ENCODE measurements at regions of chr12 and their contacts with region 1.

Region 1: DNA sequence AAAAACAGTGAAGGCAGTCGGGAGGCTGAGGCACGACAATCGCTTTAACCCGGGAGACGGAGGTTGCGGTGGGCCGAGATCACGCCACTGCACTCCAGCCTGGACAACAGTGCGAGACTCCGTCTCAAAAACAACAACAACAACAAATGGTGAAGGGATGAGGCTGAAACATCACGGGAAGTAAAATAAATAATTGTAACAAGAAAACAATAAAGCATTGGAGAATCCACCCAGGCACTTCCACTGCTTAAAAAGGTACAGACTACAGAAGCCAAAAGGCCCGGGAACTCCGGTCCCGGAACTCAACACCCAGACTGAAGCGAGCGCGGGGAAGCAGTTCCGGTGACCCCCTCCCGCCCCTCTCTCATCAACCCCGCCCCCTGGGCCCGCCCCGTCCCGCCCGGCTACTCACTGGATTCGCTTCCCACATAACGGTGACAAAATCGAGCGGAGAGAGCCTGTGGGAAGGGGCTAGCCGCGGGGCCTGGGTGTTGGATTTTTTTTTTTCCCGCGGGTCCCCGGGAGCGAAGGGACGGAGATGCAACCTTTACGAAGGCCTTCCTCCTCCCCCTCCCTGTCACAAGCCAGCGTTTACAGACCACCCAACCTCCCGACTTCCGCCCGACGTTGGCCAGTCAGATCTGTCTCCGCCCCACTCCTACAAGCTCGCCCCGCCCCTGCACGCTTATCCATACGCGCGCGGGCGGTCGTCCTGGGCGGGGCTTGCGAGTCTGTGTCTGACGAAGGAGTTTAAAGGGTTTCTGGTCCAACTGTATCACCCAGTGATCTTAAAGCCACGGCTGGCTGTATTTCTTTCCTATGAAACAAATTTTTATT is at the start of gene PARP11:
- DNase-seq: peak; percentile 97
- H3K4me3 ChIP-seq: peak within 1 kb of the TSS; percentile 80
- H3K27ac ChIP-seq: peak within 1 kb of the TSS; percentile 49
- H3K4me1 ChIP-seq: peaks cover 36% of the 10 kb centered on the region
- CTCF ChIP-seq: no peak
- total RNA-seq, gene PARP11: 3.8 and 13.6 TPM in 2 replicates

Region 2: GRCh38 chr12:3542883-3543282 is 330.1 kb before region 1 on chr12:
- CTCF ChIA-PET with region 1: no interaction called
- POLR2A ChIA-PET with region 1: no interaction called
- intact Hi-C with region 1: no loop called
- DNase-seq: no peak
- H3K4me3 ChIP-seq: no peak overlapping the region
- H3K27ac ChIP-seq: no peak overlapping the region
- H3K4me1 ChIP-seq: no peaks in the 10 kb centered on the region
- CTCF ChIP-seq: no peak

Region 3: DNA sequence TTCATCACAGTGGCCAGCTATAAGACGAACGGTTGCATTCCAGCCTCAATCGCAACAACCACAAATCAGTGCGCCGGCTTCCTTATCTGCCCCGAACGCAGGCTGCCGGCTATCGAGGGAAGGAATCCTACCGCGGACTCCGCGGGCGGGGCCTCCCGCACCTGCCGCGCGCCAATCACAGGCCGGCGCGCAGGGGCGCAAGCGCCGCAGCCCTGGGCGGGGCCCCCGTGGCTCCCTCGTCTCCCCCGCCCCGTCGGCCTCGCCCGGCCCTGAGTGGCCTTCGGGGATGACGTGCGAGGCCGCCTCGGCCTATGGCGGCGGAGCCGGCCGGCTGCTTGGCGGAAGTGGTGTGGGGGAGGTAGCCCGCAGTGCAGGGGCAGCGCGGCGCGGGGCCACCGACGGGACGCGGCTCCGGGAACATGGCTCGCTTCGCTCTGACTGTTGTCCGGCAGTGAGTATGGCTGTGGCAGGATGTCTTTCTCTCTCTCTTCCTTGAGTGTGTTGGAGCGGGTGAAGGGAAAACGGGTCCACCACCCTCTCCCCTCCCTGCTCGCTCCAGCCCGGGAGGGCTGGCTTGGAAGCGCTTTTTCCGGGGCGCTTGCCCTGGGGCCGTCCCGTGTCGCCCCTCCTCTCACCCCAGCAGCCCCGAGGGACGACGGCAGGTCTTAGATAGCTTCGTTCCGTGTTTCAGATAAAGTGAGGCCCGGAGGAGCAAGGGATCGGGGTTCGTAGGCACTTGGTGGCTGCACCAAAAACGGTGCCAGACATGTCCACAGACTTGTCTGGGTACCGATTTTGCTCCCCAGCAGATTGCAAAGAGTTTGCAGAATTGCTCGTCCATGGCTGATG is 448.1 kb after region 1 on chr12 and contains the start of gene TIGAR:
- CTCF ChIA-PET with region 1: no interaction called
- POLR2A ChIA-PET with region 1: interaction called, 3 read pairs
- intact Hi-C with region 1: loop called (anchors 5 kb)
- DNase-seq: peak; percentile 96
- H3K4me3 ChIP-seq: peak within 1 kb of the TSS; percentile 85
- H3K27ac ChIP-seq: peak within 1 kb of the TSS; percentile 59
- H3K4me1 ChIP-seq: peaks cover 23% of the 10 kb centered on the region
- CTCF ChIP-seq: no peak
- total RNA-seq, gene TIGAR: 8.0 and 15.4 TPM in 2 replicates

Region 4: DNA sequence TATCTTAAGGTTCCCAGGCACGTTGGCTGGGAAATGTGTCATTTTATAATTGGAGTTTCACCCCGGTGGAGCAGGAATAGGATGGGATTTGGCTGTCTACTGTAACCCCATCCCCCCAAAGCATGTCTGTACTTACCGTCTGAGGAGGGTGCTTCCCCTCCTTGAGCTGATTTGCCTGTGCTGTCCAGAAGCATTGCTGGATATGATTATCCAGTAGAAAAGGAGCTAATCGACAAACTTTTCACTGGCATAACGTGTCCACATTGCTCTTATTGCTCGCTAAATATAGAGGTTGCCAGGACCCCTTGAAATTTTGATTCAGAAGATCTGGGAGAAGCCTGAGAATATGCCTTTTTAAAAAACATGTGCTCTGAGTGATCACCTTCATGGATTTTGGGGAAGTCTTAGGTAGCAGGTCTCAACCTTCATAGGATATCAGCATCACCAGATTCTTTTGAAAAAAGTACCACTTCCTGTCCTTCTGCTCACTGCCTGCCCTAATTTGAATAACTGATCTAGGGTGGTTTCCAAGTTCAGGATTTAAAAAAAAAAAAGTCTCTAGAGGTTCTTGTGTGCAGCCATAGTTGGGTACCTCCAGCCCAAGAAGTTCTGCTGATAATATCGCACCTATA is 956.3 kb after region 1 on chr12:
- CTCF ChIA-PET with region 1: no interaction called
- POLR2A ChIA-PET with region 1: no interaction called
- intact Hi-C with region 1: loop called (anchors 2 kb)
- DNase-seq: peak; percentile 90
- H3K4me3 ChIP-seq: peak overlapping the region; percentile 82
- H3K27ac ChIP-seq: peak overlapping the region; percentile 98
- H3K4me1 ChIP-seq: peaks cover 54% of the 10 kb centered on the region
- CTCF ChIP-seq: no peak